IMR-90 (cell line): ENCODE measurements at regions of chr13 and their contacts with region 1.

Region 1: DNA sequence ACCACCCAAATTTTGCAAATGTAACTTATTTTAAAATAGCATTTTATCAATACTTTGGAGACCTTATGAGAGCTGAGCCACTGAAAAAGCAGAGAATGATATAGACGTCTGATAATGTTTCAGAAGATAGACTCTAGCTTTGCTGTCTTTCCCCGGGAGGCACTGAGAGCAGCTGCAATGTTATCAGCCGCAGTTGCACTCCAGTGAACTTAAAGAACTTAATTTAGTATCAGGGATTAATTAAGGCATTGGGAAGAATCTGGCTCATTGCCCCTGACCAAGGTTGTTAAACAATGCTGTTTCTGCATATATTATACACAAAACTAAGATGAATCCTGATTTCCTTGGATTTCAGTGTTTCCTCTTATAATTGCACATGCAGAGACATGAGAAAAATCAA is 75.7 kb upstream of the SGCG start:
- DNase-seq: no peak
- ATAC-seq: no peak
- H3K4me3 ChIP-seq: no peak overlapping the region
- H3K27ac ChIP-seq: no peak overlapping the region
- H3K4me1 ChIP-seq: no peaks in the 10 kb centered on the region
- H3K27me3 ChIP-seq: peaks cover 2% of the 10 kb centered on the region; the same call in 1 of the 2 replicates
- CTCF ChIP-seq: no peak
- POLR2A ChIP-seq: no peak
- RAD21 ChIP-seq: no peak

Region 2: GRCh38 chr13:22311734-22312404 is 793.2 kb before region 1 on chr13:
- CTCF ChIA-PET with region 1: no interaction called
- POLR2A ChIA-PET with region 1: no interaction called
- dilution Hi-C with region 1: no loop called
- in situ Hi-C with region 1: no loop called
- intact Hi-C with region 1: no loop called
- DNase-seq: no peak
- ATAC-seq: no peak
- H3K4me3 ChIP-seq: no peak overlapping the region
- H3K27ac ChIP-seq: no peak overlapping the region
- H3K4me1 ChIP-seq: no peaks in the 10 kb centered on the region
- H3K27me3 ChIP-seq: no peaks in the 10 kb centered on the region
- CTCF ChIP-seq: no peak
- POLR2A ChIP-seq: no peak
- RAD21 ChIP-seq: no peak

Region 3: GRCh38 chr13:24865163-24865953 is 1760.3 kb after region 1 on chr13:
- CTCF ChIA-PET with region 1: no interaction called
- POLR2A ChIA-PET with region 1: interaction called, 19 read pairs
- dilution Hi-C with region 1: no loop called
- in situ Hi-C with region 1: no loop called
- intact Hi-C with region 1: no loop called
- DNase-seq: peak; percentile 4
- ATAC-seq: peak; percentile 27; the same call in 1 of the 2 replicates
- H3K4me3 ChIP-seq: no peak overlapping the region
- H3K27ac ChIP-seq: no peak overlapping the region
- H3K4me1 ChIP-seq: no peaks in the 10 kb centered on the region
- H3K27me3 ChIP-seq: peaks cover 6% of the 10 kb centered on the region
- CTCF ChIP-seq: peak; percentile 32; the same call in 1 of the 2 replicates
- POLR2A ChIP-seq: no peak
- RAD21 ChIP-seq: peak; percentile 23; the same call in 1 of the 2 replicates